K562 (cell line): ENCODE measurements at regions of chr1 and their contacts with region 1.

Region 1: GRCh38 chr1:205255941-205256780 is 28.4 kb downstream of the TMCC2 start:
- DNase-seq: peak; percentile 87 to 91 (median 90)
- ATAC-seq: peak; percentile 94
- H3K4me3 ChIP-seq: no peak overlapping the region
- H3K27ac ChIP-seq: no peak overlapping the region
- H3K4me1 ChIP-seq: peaks cover 12 to 27% of the 10 kb centered on the region in 2 experiments
- H3K27me3 ChIP-seq: peaks cover 0 to 4% of the 10 kb centered on the region in 2 experiments; a peak in 1 of 5 replicates
- CTCF ChIP-seq: peak; percentile 97 to 100 (median 99)
- EP300 ChIP-seq: peak; percentile 85
- POLR2A ChIP-seq: no peak
- RAD21 ChIP-seq: peak; percentile 99 to 100

Region 2: DNA sequence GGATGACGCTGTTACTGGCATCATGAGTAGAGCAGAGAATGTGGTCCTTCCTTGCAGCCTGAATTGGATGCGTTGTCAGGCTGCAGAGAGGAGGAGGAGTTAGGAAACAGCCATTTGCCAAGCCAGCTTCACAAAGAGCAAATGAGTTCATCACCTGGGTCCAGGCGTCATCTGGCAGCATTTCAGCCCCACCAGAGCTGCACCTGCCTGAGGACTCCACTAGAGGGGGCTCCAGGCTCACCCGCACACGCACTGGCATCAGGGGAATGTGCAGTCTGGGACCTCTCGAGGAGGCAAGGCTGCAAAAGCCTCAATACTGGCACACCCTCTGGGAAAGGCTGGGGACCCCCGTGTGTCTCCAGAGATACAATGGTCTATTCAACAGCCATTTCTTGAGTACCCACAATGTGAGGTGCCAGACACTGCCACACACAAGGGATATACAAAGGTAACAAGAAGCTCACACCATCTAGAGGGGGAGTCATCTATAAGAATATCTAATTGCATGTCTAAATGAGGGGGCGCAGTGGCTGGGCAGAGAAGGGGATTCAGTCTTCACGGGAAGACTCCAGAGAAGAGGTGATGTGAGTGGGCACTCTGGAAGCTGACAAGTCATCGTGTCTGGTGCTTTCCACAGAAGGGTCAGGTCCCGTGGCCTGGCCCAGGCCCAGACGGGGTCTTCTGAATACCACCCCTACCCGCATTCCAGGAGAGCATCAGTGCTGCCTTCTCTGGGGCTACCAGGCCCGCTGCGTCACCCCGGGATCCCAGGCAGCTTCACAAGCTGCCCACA is 266.7 kb before region 1 on chr1:
- CTCF ChIA-PET with region 1: interaction called, 15 read pairs
- POLR2A ChIA-PET with region 1: interaction called, 5 read pairs
- in situ Hi-C with region 1: no loop called
- intact Hi-C with region 1: loop called (anchors 1 kb)
- DNase-seq: peak; percentile 71 to 90 (median 88)
- ATAC-seq: peak; percentile 90
- H3K4me3 ChIP-seq: no peak overlapping the region
- H3K27ac ChIP-seq: no peak overlapping the region
- H3K4me1 ChIP-seq: peaks cover 2 to 6% of the 10 kb centered on the region in 2 experiments; a peak in 3 of 5 replicates
- H3K27me3 ChIP-seq: peaks cover 48 to 87% of the 10 kb centered on the region in 2 experiments
- CTCF ChIP-seq: peak; percentile 95 to 99 (median 98)
- EP300 ChIP-seq: no peak
- POLR2A ChIP-seq: no peak
- RAD21 ChIP-seq: peak; percentile 90 to 96

Region 3: DNA sequence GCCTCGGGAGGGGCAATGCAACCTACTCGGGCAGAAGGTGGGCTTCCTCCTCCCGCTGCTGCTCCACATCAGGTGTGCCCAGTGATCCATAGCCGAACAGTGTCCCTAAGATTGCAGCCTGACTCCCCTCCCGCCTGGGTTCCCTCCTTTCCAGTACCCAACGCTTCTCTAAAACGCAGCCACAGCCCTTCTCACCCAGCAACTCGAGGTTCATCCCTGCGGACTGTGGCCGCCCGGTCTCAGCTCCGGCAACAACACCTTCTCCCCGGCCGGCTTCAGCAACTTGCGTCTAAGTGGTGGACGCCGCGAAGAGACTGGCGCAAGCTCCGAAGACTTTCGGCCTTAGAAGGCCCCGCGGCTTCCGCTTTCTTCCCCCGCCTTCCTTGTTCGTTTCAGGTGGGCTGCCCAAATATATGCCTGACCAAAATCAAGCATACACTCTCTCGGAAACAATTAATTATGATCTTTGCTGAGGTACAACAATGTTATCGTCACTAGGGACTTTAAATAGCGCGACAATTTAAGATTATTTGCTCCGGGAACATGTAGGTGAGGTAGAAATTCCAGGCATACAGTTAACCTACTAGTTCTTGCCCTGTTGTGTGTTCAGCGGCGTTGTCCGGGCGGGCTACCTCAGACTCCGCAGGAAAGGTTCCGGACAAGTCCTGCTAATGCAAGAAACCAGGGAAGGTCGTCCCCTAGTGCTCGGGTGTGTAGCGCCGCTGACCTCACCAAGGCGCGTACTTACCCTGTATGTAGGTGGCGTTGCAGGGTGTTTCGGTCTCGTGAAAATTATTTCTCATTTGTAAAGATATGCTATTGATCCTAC is 134.3 kb before region 1 on chr1 and contains the start of gene RBBP5:
- CTCF ChIA-PET with region 1: interaction called, 7 read pairs
- POLR2A ChIA-PET with region 1: interaction called, 10 read pairs
- in situ Hi-C with region 1: no loop called
- intact Hi-C with region 1: loop called (anchors 1 kb)
- DNase-seq: peak; percentile 93 to 99 (median 94)
- ATAC-seq: peak; percentile 98
- H3K4me3 ChIP-seq: peak within 1 kb of the TSS; percentile 73
- H3K27ac ChIP-seq: peak within 1 kb of the TSS; percentile 98
- H3K4me1 ChIP-seq: peaks cover 18 to 19% of the 10 kb centered on the region in 2 experiments; a peak in 4 of 5 replicates
- H3K27me3 ChIP-seq: no peaks in the 10 kb centered on the region
- CTCF ChIP-seq: peak; percentile 98 to 99 (median 99)
- EP300 ChIP-seq: peak; percentile 75
- POLR2A ChIP-seq: peak; percentile 99
- RAD21 ChIP-seq: peak; percentile 65 to 82
- polyA plus RNA-seq, gene RBBP5: 20.0 to 28.4 TPM

Region 4: GRCh38 chr1:205227584-205228006 is 28.6 kb before region 1 on chr1 and contains the start of gene TMCC2:
- CTCF ChIA-PET with region 1: interaction called, 16 read pairs
- POLR2A ChIA-PET with region 1: interaction called, 6 read pairs
- in situ Hi-C with region 1: no loop called
- intact Hi-C with region 1: loop called (anchors 1 kb)
- DNase-seq: peak; percentile 95 to 100 (median 99)
- ATAC-seq: peak; percentile 96
- H3K4me3 ChIP-seq: peak within 1 kb of the TSS; percentile 47
- H3K27ac ChIP-seq: no peak within 1 kb of the TSS
- H3K4me1 ChIP-seq: peaks cover 27 to 29% of the 10 kb centered on the region in 2 experiments
- H3K27me3 ChIP-seq: peaks cover 3 to 13% of the 10 kb centered on the region in 2 experiments; a peak in 4 of 5 replicates
- CTCF ChIP-seq: no peak
- EP300 ChIP-seq: no peak
- POLR2A ChIP-seq: no peak
- RAD21 ChIP-seq: no peak; a peak in 1 of 4 replicates
- polyA plus RNA-seq, gene TMCC2: 0.06 to 0.10 TPM

Region 5: GRCh38 chr1:205243350-205244191 is 12.6 kb before region 1 on chr1:
- CTCF ChIA-PET with region 1: no interaction called
- POLR2A ChIA-PET with region 1: interaction called, 21 read pairs
- in situ Hi-C with region 1: no loop called
- intact Hi-C with region 1: no loop called
- DNase-seq: no peak
- ATAC-seq: no peak
- H3K4me3 ChIP-seq: no peak overlapping the region
- H3K27ac ChIP-seq: no peak overlapping the region
- H3K4me1 ChIP-seq: peaks cover 15 to 16% of the 10 kb centered on the region in 2 experiments
- H3K27me3 ChIP-seq: peaks cover 0 to 22% of the 10 kb centered on the region in 2 experiments; a peak in 2 of 5 replicates
- CTCF ChIP-seq: no peak
- EP300 ChIP-seq: no peak
- POLR2A ChIP-seq: no peak
- RAD21 ChIP-seq: no peak